Lower leg skin (tissue), 4 donors: ENCODE measurements at regions of chr2 and their contacts with region 1.

Region 1: GRCh38 chr2:219029829-219030165 is 11.5 kb downstream of the CFAP65 start:
- DNase-seq: peak; percentile 65 to 96
- H3K4me3 ChIP-seq: no peak overlapping the region
- CTCF ChIP-seq: peak in 1 of 3 donors; percentile 73
- POLR2A ChIP-seq: no peak

Region 2: DNA sequence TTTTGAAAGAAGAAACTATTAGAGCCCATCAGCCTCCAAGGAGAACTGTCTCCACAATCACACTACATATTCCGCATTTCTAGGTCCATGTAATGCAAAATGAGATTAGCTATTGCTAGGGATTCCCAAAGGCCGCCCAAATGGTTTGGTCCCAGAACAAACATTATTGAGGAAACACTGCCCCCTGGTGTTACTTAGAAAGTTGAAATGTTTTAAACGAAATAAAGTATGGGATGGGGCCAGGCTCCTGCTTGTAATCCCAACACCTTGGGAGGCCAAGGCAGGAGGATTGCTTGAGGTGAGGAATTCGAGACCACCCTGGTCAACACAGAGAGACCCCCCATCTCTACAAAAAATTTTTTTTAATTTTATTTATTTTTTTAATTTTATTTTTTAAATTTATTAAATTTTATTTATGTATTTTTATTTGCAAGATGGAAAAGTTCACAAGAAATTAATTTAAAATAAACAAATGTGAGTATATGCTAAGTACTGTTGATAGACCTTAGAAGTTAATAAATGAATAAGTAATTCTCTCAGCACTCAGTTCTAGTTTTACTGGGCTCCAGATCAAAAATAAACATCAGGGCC is 125.4 kb after region 1 on chr2:
- intact Hi-C with region 1: loop called (anchors 5 kb)
- DNase-seq: peak; percentile 33 to 46
- H3K4me3 ChIP-seq: no peak overlapping the region
- CTCF ChIP-seq: no peak
- POLR2A ChIP-seq: no peak